ENCODE measurements at regions of chr2 and their contacts with region 1.

Region 1: DNA sequence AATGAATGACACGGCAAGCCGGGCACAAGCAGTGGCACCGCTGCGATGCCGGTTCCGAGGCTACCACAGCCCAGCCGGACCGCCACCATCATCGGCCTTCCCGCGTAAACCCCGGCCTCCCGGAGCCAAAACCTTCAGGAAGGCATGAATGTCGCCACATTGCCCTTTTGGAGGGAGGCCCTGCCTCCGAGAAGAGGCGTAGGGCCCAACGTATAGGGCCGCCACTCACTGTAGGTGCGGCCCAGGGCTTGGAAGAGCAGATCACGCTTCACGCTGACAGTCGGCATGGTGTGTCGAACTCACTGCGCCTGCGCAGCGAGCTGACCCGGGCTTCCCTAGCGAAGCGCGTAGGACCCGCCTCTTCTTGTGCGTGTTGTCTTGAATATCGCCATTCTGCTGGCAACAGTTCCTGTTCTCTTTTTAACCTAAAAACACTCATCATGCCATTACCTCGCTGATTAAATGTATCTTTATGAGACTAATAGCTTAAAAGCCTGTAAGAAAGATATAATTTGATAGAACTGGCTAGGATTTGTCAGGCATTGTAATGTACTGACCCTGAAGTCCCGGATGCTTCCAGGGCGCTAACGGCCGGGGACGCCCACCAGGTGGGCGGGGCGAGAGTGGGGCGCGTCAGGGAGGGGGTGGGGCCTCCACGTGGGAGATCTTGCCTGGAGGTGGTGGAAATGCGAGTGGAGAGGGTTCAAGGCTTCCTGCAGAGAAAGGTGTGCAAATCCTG is at the start of gene FARSB:
- DNase-seq: peak; percentile 86 to 98 (median 94)
- ATAC-seq: peak; percentile 96
- H3K4me3 ChIP-seq: peak within 1 kb of the TSS; percentile 82
- H3K4me3 Mint-ChIP-seq: peak within 1 kb of the TSS; percentile 95 to 100 (median 99)
- H3K27ac ChIP-seq: peak within 1 kb of the TSS; percentile 94
- H3K27ac Mint-ChIP-seq: peak within 1 kb of the TSS; percentile 98 to 100 (median 99)
- H3K4me1 ChIP-seq: peaks cover 18 to 20% of the 10 kb centered on the region in 2 donors
- H3K4me1 Mint-ChIP-seq: peaks cover 30 to 59% (median 45%) of the 10 kb centered on the region in 7 donors
- H3K27me3 ChIP-seq: no peaks in the 10 kb centered on the region
- H3K27me3 Mint-ChIP-seq: no peaks in the 10 kb centered on the region
- total RNA-seq, gene FARSB: 10.5 to 23.3 (median 13.8) TPM

Region 2: GRCh38 chr2:222424729-222425671 is 231.0 kb before region 1 on chr2:
- CTCF ChIA-PET with region 1: no interaction called
- POLR2A ChIA-PET with region 1: no interaction called
- intact Hi-C with region 1: loop called in 1 of 2 experiments (anchors 2 kb)
- DNase-seq: peak in 2 of 9 donors; percentile 9 to 48
- ATAC-seq: peak; percentile 54
- H3K4me3 ChIP-seq: peak overlapping the region; percentile 48
- H3K4me3 Mint-ChIP-seq: peak overlapping the region; percentile 48 to 90 (median 68)
- H3K27ac ChIP-seq: no peak overlapping the region
- H3K27ac Mint-ChIP-seq: peak overlapping the region in 1 of 9 donors; percentile 79
- H3K4me1 ChIP-seq: peaks cover 0 to 5% of the 10 kb centered on the region in 2 donors
- H3K4me1 Mint-ChIP-seq: peaks cover 7 to 43% (median 17%) of the 10 kb centered on the region in 7 donors
- H3K27me3 ChIP-seq: no peaks in the 10 kb centered on the region
- H3K27me3 Mint-ChIP-seq: peaks cover 46 to 72% (median 66%) of the 10 kb centered on the region in 5 donors

Region 3: GRCh38 chr2:222690564-222691200 is 34.7 kb after region 1 on chr2:
- CTCF ChIA-PET with region 1: no interaction called
- POLR2A ChIA-PET with region 1: no interaction called
- intact Hi-C with region 1: loop called (anchors 1 to 2 kb)
- DNase-seq: peak; percentile 48 to 77 (median 68)
- ATAC-seq: peak; percentile 100
- H3K4me3 ChIP-seq: no peak overlapping the region
- H3K4me3 Mint-ChIP-seq: peak overlapping the region in 2 of 10 donors; percentile 30 to 40
- H3K27ac ChIP-seq: no peak overlapping the region
- H3K27ac Mint-ChIP-seq: peak overlapping the region in 1 of 9 donors; percentile 51
- H3K4me1 ChIP-seq: no peaks in the 10 kb centered on the region
- H3K4me1 Mint-ChIP-seq: peaks cover 0 to 16% (median 7%) of the 10 kb centered on the region in 7 donors
- H3K27me3 ChIP-seq: no peaks in the 10 kb centered on the region
- H3K27me3 Mint-ChIP-seq: peaks cover 0 to 22% (median 3%) of the 10 kb centered on the region in 5 donors

Region 4: GRCh38 chr2:222792001-222792611 is 136.2 kb after region 1 on chr2:
- CTCF ChIA-PET with region 1: no interaction called
- POLR2A ChIA-PET with region 1: no interaction called
- intact Hi-C with region 1: loop called in 1 of 2 experiments (anchors 1 kb)
- DNase-seq: no peak
- ATAC-seq: peak; percentile 68
- H3K4me3 ChIP-seq: no peak overlapping the region
- H3K4me3 Mint-ChIP-seq: no peak overlapping the region
- H3K27ac ChIP-seq: no peak overlapping the region
- H3K27ac Mint-ChIP-seq: no peak overlapping the region
- H3K4me1 ChIP-seq: peaks cover 0 to 10% of the 10 kb centered on the region in 2 donors
- H3K4me1 Mint-ChIP-seq: peaks cover 11 to 17% (median 12%) of the 10 kb centered on the region in 7 donors
- H3K27me3 ChIP-seq: no peaks in the 10 kb centered on the region
- H3K27me3 Mint-ChIP-seq: no peaks in the 10 kb centered on the region

Measured in naive thymus-derived CD4-positive, alpha-beta T cell (primary cell).